ENCODE measurements at regions of chr15 and their contacts with region 1.

Region 1: GRCh38 chr15:65530314-65531122 is at the start of gene HACD3:
- DNase-seq: peak; percentile 86
- H3K4me3 Mint-ChIP-seq: peak within 1 kb of the TSS; percentile 89
- H3K27ac Mint-ChIP-seq: peak within 1 kb of the TSS; percentile 83
- H3K4me1 Mint-ChIP-seq: peaks cover 39% of the 10 kb centered on the region
- H3K27me3 Mint-ChIP-seq: peaks cover 2% of the 10 kb centered on the region
- total RNA-seq, gene HACD3: 45.8 and 46.0 TPM in 2 replicates

Region 2: GRCh38 chr15:65516997-65517865 is 13.3 kb before region 1 on chr15 and contains the start of gene DPP8:
- intact Hi-C with region 1: loop called (anchors 1 kb)
- DNase-seq: peak; percentile 92
- H3K4me3 Mint-ChIP-seq: peak within 1 kb of the TSS; percentile 90
- H3K27ac Mint-ChIP-seq: peak within 1 kb of the TSS; percentile 90
- H3K4me1 Mint-ChIP-seq: peaks cover 32% of the 10 kb centered on the region
- H3K27me3 Mint-ChIP-seq: no peaks in the 10 kb centered on the region
- total RNA-seq, gene DPP8: 34.8 and 35.6 TPM in 2 replicates

Region 3: DNA sequence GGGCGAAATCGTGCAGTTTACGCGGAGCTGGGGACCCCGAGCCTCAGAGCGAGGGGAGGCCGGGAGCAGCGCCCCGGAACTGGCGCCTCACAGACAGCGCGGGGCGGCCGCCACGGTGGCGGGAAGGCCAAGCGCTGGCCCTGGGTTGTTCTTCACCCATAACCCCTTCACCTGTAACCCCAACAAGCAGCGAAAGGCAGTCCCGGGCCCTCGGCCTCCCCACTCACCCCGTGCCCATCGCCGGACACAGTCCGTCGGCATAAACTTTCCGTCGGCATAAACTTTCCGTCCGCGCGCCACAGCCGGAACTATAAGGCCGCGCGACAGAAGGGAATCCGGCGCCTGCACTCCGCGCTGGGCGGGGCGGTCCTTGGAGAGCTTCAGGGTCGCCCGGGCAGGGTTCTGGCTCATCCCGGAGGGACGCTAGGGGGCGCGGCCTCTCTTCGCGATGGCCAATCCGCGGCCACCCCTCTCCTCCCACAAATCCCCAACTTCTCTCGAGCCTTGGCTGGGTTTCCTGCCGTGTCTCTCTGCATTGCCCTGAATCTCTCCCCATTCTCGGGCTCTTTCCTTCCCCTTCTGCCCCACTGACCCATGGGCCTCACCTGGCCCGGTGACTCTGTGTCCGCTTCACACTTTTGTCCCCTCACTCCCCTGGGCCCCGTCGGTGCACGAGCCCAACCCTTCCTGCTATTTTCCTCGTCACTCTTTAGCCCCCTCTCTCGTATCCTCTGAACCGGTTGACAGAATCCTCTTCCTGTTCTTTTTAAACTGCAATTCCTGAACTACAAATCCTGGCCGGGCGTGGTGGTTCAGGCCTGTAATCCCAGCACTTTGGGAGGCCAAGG is 80.6 kb after region 1 on chr15 and contains the start of gene INTS14:
- intact Hi-C with region 1: loop called (anchors 1 kb)
- DNase-seq: peak; percentile 89
- H3K4me3 Mint-ChIP-seq: peak within 1 kb of the TSS; percentile 90
- H3K27ac Mint-ChIP-seq: peak within 1 kb of the TSS; percentile 96
- H3K4me1 Mint-ChIP-seq: peaks cover 36% of the 10 kb centered on the region
- H3K27me3 Mint-ChIP-seq: no peaks in the 10 kb centered on the region
- total RNA-seq, gene INTS14: 47.4 and 53.3 TPM in 2 replicates

Region 4: GRCh38 chr15:65881766-65882434 is 351.4 kb after region 1 on chr15:
- intact Hi-C with region 1: loop called (anchors 5 kb)
- DNase-seq: no peak
- H3K4me3 Mint-ChIP-seq: peak overlapping the region; percentile 28
- H3K27ac Mint-ChIP-seq: peak overlapping the region; percentile 11
- H3K4me1 Mint-ChIP-seq: peaks cover 71% of the 10 kb centered on the region
- H3K27me3 Mint-ChIP-seq: no peaks in the 10 kb centered on the region